ENCODE measurements at regions of chr20 and their contacts with region 1.

Region 1: DNA sequence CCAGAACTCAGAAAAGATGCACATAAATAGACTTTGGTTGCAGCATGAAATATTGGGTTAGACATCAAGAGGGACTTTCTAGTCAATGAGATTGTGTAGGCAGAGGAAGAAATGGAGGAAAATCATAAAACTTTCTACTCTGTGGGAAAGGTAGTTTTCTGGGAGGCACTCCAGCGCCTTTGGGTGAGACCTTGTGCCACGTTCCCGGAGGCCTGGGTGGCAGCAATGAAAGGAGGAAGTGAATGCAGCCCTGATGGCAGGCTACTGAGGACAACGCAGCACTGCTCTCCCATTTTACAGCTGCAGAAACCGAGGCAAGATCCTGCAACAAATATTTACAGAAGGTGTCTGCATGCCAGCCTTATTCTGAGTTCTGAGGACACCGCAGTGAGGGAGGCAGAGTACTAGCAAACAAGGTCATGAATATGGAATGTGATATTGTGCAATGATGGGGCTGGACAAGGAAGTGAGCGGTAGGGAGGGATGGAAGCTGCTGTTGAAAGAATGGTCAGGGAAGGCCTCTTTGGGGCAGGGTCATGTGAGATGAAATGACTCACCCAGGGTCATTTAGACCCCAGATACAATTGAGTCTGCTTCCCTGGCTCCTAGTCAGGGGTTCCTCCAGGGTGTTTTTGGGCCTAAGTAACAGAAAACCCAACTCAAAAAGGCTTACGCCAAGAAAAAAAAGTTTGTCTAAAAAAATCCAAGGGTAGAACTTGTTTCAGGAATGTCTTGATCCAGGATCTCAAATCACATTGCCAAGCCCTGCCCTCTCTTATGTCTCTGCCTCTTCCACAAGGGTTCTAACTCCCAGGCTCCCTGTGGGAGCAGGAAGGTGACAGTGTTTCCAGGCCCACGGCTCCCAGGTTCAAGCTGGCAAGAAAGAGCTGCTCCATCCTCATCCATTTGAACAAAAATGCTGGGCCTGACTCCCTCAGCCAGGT is 159.2 kb downstream of the TFAP2C start:
- DNase-seq: peak; percentile 85
- H3K4me3 ChIP-seq: no peak overlapping the region
- H3K27ac ChIP-seq: peak overlapping the region; percentile 99
- H3K4me1 ChIP-seq: peaks cover 18% of the 10 kb centered on the region
- H3K27me3 ChIP-seq: no peaks in the 10 kb centered on the region
- CTCF ChIP-seq: no peak

Region 2: GRCh38 chr20:56765162-56766073 is 22.9 kb before region 1 on chr20:
- CTCF ChIA-PET with region 1: no interaction called
- dilution Hi-C with region 1: no loop called
- in situ Hi-C with region 1: no loop called
- intact Hi-C with region 1: loop called (anchors 2 kb)
- DNase-seq: peak; percentile 84
- H3K4me3 ChIP-seq: no peak overlapping the region
- H3K27ac ChIP-seq: peak overlapping the region; percentile 60
- H3K4me1 ChIP-seq: peaks cover 38% of the 10 kb centered on the region
- H3K27me3 ChIP-seq: no peaks in the 10 kb centered on the region
- CTCF ChIP-seq: no peak

Region 3: GRCh38 chr20:56808732-56809131 is 20.4 kb after region 1 on chr20:
- CTCF ChIA-PET with region 1: no interaction called
- dilution Hi-C with region 1: no loop called
- in situ Hi-C with region 1: no loop called
- intact Hi-C with region 1: loop called (anchors 2 kb)
- DNase-seq: peak; percentile 78
- H3K4me3 ChIP-seq: no peak overlapping the region
- H3K27ac ChIP-seq: peak overlapping the region; percentile 38
- H3K4me1 ChIP-seq: peaks cover 42% of the 10 kb centered on the region
- H3K27me3 ChIP-seq: no peaks in the 10 kb centered on the region
- CTCF ChIP-seq: no peak